ENCODE measurements at regions of chr10 and their contacts with region 1.

Region 1: GRCh38 chr10:110304780-110305421 is at the start of gene SMNDC1:
- DNase-seq: peak; percentile 93 to 97 (median 96)
- ATAC-seq: peak; percentile 94
- H3K4me3 ChIP-seq: peak within 1 kb of the TSS; percentile 91
- H3K4me3 Mint-ChIP-seq: peak within 1 kb of the TSS; percentile 94 to 99 (median 98)
- H3K27ac ChIP-seq: peak within 1 kb of the TSS; percentile 89
- H3K27ac Mint-ChIP-seq: peak within 1 kb of the TSS; percentile 97 to 100 (median 100)
- H3K4me1 ChIP-seq: peaks cover 32 to 38% of the 10 kb centered on the region in 2 donors
- H3K4me1 Mint-ChIP-seq: peaks cover 26 to 61% (median 55%) of the 10 kb centered on the region in 7 donors
- H3K27me3 ChIP-seq: no peaks in the 10 kb centered on the region
- H3K27me3 Mint-ChIP-seq: no peaks in the 10 kb centered on the region
- total RNA-seq, gene SMNDC1: 34.4 to 43.1 (median 40.1) TPM

Region 2: DNA sequence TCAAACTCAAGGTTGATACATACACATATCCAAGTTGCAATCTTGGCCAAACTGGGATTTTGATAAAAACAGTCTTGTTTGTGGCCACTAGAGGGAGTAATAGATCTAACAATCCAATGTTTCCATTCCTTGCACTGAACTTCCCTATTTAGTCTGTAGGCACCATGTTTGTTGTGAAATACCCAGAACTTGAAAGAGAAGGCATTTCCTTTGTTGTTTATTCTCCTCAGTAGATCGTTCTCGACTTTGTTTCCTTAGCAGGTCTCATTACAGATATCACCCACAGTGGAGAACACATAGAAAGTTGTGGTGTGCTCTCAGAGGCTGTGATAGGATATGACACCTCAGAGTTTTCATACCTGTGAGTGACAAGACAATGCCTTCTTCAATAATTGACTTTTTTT is 167.8 kb before region 1 on chr10:
- CTCF ChIA-PET with region 1: interaction called, 5 read pairs
- POLR2A ChIA-PET with region 1: interaction called, 10 read pairs
- intact Hi-C with region 1: loop called (anchors 1 kb)
- DNase-seq: peak in 7 of 9 donors; percentile 48 to 67 (median 64)
- ATAC-seq: peak; percentile 85
- H3K4me3 ChIP-seq: no peak overlapping the region
- H3K4me3 Mint-ChIP-seq: peak overlapping the region in 1 of 10 donors; percentile 19
- H3K27ac ChIP-seq: peak overlapping the region; percentile 4
- H3K27ac Mint-ChIP-seq: peak overlapping the region; percentile 2 to 83 (median 45)
- H3K4me1 ChIP-seq: peaks cover 14% of the 10 kb centered on the region in 2 donors
- H3K4me1 Mint-ChIP-seq: peaks cover 13 to 38% (median 29%) of the 10 kb centered on the region in 7 donors
- H3K27me3 ChIP-seq: no peaks in the 10 kb centered on the region
- H3K27me3 Mint-ChIP-seq: no peaks in the 10 kb centered on the region

Region 3: GRCh38 chr10:110354322-110354766 is 49.4 kb after region 1 on chr10:
- CTCF ChIA-PET with region 1: interaction called, 8 read pairs
- POLR2A ChIA-PET with region 1: interaction called, 3 read pairs
- intact Hi-C with region 1: loop called (anchors 1 kb)
- DNase-seq: peak in 8 of 9 donors; percentile 49 to 75 (median 58)
- ATAC-seq: peak; percentile 73
- H3K4me3 ChIP-seq: no peak overlapping the region
- H3K4me3 Mint-ChIP-seq: peak overlapping the region in 6 of 10 donors; percentile 17 to 48 (median 25)
- H3K27ac ChIP-seq: no peak overlapping the region
- H3K27ac Mint-ChIP-seq: peak overlapping the region in 7 of 9 donors; percentile 14 to 97 (median 53)
- H3K4me1 ChIP-seq: peaks cover 43 to 47% of the 10 kb centered on the region in 2 donors
- H3K4me1 Mint-ChIP-seq: peaks cover 33 to 57% (median 50%) of the 10 kb centered on the region in 7 donors
- H3K27me3 ChIP-seq: no peaks in the 10 kb centered on the region
- H3K27me3 Mint-ChIP-seq: no peaks in the 10 kb centered on the region

Region 4: DNA sequence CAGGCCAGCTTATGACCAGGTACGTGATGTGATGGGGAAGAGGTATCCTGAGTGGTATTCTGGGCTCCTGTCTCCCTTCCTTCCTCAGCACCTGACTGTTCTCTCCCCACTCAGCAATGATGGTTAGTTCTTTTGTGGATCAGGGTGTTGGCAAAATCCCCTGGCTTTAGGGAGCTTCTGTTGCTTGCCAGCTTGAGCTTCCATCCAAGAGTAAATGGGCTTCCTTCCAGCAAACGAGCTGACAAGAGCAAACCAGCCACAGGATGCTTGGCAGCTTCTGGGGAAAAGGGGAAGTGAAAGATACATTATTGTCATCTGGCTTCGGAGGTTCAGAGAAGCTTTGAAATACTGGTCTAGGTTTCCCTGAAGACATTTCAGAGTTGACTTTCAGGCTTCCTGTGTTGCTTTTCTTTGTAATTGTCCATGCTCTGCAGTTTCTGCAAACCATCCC is 198.0 kb after region 1 on chr10:
- CTCF ChIA-PET with region 1: interaction called, 4 read pairs
- POLR2A ChIA-PET with region 1: interaction called, 21 read pairs
- intact Hi-C with region 1: loop called in 1 of 2 experiments (anchors 1 kb)
- DNase-seq: peak in 1 of 9 donors; percentile 18
- ATAC-seq: peak; percentile 10
- H3K4me3 ChIP-seq: peak overlapping the region; percentile 17
- H3K4me3 Mint-ChIP-seq: peak overlapping the region; percentile 15 to 97 (median 70)
- H3K27ac ChIP-seq: peak overlapping the region; percentile 53
- H3K27ac Mint-ChIP-seq: peak overlapping the region; percentile 53 to 94 (median 81)
- H3K4me1 ChIP-seq: peaks cover 42 to 70% of the 10 kb centered on the region in 2 donors
- H3K4me1 Mint-ChIP-seq: peaks cover 55 to 88% (median 60%) of the 10 kb centered on the region in 7 donors
- H3K27me3 ChIP-seq: no peaks in the 10 kb centered on the region
- H3K27me3 Mint-ChIP-seq: peaks cover 0 to 3% (median 0%) of the 10 kb centered on the region in 5 donors

Region 5: GRCh38 chr10:110547139-110547761 is 242.3 kb after region 1 on chr10:
- CTCF ChIA-PET with region 1: interaction called, 78 read pairs
- POLR2A ChIA-PET with region 1: interaction called, 10 read pairs
- intact Hi-C with region 1: loop called (anchors 1 kb)
- DNase-seq: peak in 7 of 9 donors; percentile 40 to 75 (median 68)
- ATAC-seq: peak; percentile 85
- H3K4me3 ChIP-seq: no peak overlapping the region
- H3K4me3 Mint-ChIP-seq: peak overlapping the region in 1 of 10 donors; percentile 2
- H3K27ac ChIP-seq: no peak overlapping the region
- H3K27ac Mint-ChIP-seq: peak overlapping the region in 2 of 9 donors; percentile 3 to 6
- H3K4me1 ChIP-seq: peaks cover 0 to 5% of the 10 kb centered on the region in 2 donors
- H3K4me1 Mint-ChIP-seq: peaks cover 3 to 16% (median 5%) of the 10 kb centered on the region in 7 donors
- H3K27me3 ChIP-seq: no peaks in the 10 kb centered on the region
- H3K27me3 Mint-ChIP-seq: peaks cover 0 to 39% (median 11%) of the 10 kb centered on the region in 5 donors

Region 6: GRCh38 chr10:110600487-110601101 is 295.7 kb after region 1 on chr10:
- CTCF ChIA-PET with region 1: interaction called, 5 read pairs
- POLR2A ChIA-PET with region 1: no interaction called
- intact Hi-C with region 1: loop called (anchors 1 kb)
- DNase-seq: peak in 6 of 9 donors; percentile 19 to 39 (median 29)
- ATAC-seq: peak; percentile 70
- H3K4me3 ChIP-seq: no peak overlapping the region
- H3K4me3 Mint-ChIP-seq: no peak overlapping the region
- H3K27ac ChIP-seq: no peak overlapping the region
- H3K27ac Mint-ChIP-seq: no peak overlapping the region
- H3K4me1 ChIP-seq: no peaks in the 10 kb centered on the region
- H3K4me1 Mint-ChIP-seq: peaks cover 0 to 6% (median 0%) of the 10 kb centered on the region in 7 donors
- H3K27me3 ChIP-seq: no peaks in the 10 kb centered on the region
- H3K27me3 Mint-ChIP-seq: no peaks in the 10 kb centered on the region

Measured in naive thymus-derived CD4-positive, alpha-beta T cell (primary cell).